Prostate gland (tissue), 2 donors: ENCODE measurements at regions of chr15 and their contacts with region 1.

Region 1: DNA sequence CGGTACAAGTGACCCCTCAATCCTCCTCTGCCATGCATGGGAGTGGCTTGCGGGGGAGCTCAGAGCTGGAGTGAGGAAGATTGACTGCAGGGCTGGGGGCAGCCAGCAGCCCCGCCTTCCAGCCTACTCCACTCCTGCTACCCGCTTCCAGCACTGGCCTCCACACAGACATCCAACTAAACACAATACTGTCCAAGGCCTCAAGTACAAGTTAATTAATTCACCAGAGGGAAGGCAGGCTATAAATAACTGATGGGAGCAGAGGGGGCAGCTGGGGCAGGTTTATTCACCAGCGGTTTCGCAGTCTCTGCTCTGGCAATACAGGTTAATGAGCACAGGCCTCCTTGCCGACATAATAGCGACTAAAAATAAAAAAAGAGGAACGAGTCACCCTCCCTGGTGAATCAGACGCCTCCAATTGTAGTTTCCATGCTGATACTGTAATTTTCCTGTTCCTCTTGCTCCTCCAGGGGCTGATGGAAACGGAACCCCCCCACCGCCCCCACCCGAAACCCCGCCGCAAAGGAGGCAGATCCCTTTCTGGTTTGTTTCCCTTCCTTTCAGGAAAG is 166.4 kb upstream of the TLE3 start:
- DNase-seq: no peak
- H3K4me3 ChIP-seq: no peak overlapping the region
- H3K27ac ChIP-seq: no peak overlapping the region
- H3K4me1 ChIP-seq: no peaks in the 10 kb centered on the region
- H3K27me3 ChIP-seq: no peaks in the 10 kb centered on the region
- CTCF ChIP-seq: no peak
- POLR2A ChIP-seq: no peak

Region 2: GRCh38 chr15:70376929-70377691 is 113.0 kb after region 1 on chr15:
- intact Hi-C with region 1: no loop called
- DNase-seq: no peak
- H3K4me3 ChIP-seq: no peak overlapping the region
- H3K27ac ChIP-seq: no peak overlapping the region
- H3K4me1 ChIP-seq: peaks cover 5% of the 10 kb centered on the region
- H3K27me3 ChIP-seq: no peaks in the 10 kb centered on the region
- CTCF ChIP-seq: no peak
- POLR2A ChIP-seq: no peak

Region 3: GRCh38 chr15:70466895-70467529 is 202.9 kb after region 1 on chr15:
- intact Hi-C with region 1: loop called (anchors 10 kb)
- DNase-seq: peak; percentile 53
- H3K4me3 ChIP-seq: no peak overlapping the region
- H3K27ac ChIP-seq: no peak overlapping the region
- H3K4me1 ChIP-seq: no peaks in the 10 kb centered on the region
- H3K27me3 ChIP-seq: no peaks in the 10 kb centered on the region
- CTCF ChIP-seq: peak in 3 of 4 experiments; percentile 36 to 67 (median 63)
- POLR2A ChIP-seq: no peak